ENCODE measurements at regions of chr16 and their contacts with region 1.

Region 1: GRCh38 chr16:71883849-71884638 is at the start of gene ZNF821:
- DNase-seq: peak; percentile 84 to 86
- ATAC-seq: peak; percentile 91 to 92 (median 91)
- H3K4me3 ChIP-seq: peak within 1 kb of the TSS; percentile 93
- H3K27ac ChIP-seq: peak within 1 kb of the TSS; percentile 88
- H3K4me1 ChIP-seq: no peaks in the 10 kb centered on the region
- H3K27me3 ChIP-seq: no peaks in the 10 kb centered on the region
- CTCF ChIP-seq: peak; percentile 49
- total RNA-seq, gene ZNF821: 3.1 to 6.1 (median 4.3) TPM

Region 2: DNA sequence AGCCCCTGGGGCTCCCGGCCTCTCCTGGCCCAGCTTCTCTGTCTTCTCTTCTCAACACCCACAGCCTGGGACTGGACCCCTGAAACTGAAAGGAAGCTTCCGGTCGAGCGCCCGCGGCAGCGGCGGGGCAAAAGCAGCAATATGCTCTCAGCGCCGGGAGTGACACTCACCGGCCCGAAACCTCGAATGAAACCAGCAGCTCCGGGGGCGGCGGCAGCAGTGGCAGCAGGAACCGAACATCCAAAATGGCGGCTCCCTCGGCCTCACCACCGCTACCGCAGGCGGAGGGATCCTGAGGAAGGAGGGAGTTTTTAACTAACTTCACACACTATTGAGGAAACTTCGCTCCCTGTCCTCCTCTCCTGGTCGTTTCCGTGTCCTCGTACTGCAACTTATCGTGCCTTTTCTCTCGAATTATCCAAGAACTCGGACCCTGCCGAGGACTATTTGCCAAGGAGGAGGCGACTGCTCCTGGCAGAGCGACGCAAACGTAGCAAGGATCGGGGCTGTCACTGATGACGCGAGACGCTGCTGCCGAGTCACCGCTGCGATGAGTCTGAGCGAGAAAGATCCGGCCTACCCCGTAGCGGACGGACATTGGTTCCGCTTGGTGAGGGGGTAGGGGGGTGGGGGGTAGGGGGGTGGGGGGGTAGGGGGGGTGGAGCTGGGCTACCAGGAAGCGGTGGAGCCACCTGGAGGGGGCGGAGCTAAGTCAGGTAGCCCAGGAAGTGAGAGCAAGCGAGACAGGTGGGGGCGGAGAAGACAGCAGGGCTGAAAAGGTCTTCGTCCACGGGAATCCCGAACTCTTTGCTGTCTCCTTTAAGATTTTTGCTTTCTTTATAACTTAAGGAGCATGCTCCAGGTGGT is 75.2 kb before region 1 on chr16 and contains the start of gene AP1G1:
- intact Hi-C with region 1: loop called in 1 of 2 experiments (anchors 5 kb)
- DNase-seq: peak; percentile 95 to 98
- ATAC-seq: peak; percentile 95 to 98 (median 97)
- H3K4me3 ChIP-seq: peak within 1 kb of the TSS; percentile 99
- H3K27ac ChIP-seq: peak within 1 kb of the TSS; percentile 100
- H3K4me1 ChIP-seq: peaks cover 29% of the 10 kb centered on the region
- H3K27me3 ChIP-seq: no peaks in the 10 kb centered on the region
- CTCF ChIP-seq: no peak
- total RNA-seq, gene AP1G1: 54.1 to 69.8 (median 62.8) TPM

Region 3: DNA sequence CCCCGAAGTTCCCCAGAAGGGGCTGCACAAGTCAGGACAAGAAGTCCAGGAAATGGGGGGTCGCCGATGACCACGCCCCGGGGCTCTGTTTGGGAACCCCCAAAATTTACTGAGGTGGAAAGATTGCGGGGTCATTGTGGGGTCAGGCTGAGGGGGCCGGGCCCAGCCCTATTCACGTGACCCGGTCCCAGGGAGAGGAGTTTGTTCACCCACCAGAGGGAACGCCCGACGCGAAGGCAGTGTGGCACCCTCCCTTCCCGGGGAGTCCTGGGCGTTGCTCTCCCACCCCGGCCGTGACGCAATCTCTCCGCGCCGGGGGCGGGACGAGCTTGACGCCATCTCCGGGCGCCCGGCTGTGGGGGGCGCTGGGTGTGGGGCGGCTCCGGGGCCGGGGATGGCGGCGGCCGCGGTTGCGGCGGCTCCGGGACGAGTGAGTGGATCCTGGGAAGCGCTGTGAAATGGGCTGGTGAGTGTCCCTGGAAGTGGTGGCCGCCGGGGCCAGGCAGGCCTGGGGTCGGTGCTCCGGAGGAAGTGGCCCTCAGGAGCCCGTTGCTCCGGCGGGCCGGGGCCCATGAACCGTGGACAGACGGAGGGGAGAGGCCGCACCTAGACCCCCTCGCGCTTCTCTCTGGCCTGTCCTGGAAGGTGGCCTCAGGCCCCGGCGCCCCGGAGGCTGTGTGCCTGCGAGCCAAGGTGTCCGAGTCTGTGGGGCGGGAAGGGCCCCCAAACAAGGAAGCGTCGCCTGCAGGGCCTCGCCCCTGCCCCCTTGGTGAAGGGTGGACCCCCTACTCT is 38.2 kb before region 1 on chr16 and contains the start of gene ATXN1L:
- intact Hi-C with region 1: loop called in 1 of 2 experiments (anchors 5 kb)
- DNase-seq: peak; percentile 93 to 96
- ATAC-seq: peak; percentile 94 to 96 (median 95)
- H3K4me3 ChIP-seq: peak within 1 kb of the TSS; percentile 100
- H3K27ac ChIP-seq: peak within 1 kb of the TSS; percentile 96
- H3K4me1 ChIP-seq: peaks cover 26% of the 10 kb centered on the region
- H3K27me3 ChIP-seq: no peaks in the 10 kb centered on the region
- CTCF ChIP-seq: no peak
- total RNA-seq, gene ATXN1L: 18.1 to 28.0 (median 22.4) TPM

Region 4: GRCh38 chr16:71961066-71962039 is 77.3 kb after region 1 on chr16:
- intact Hi-C with region 1: loop called (anchors 5 to 10 kb)
- DNase-seq: peak; percentile 86 to 88
- ATAC-seq: peak; percentile 86 to 99 (median 96)
- H3K4me3 ChIP-seq: no peak overlapping the region
- H3K27ac ChIP-seq: no peak overlapping the region
- H3K4me1 ChIP-seq: no peaks in the 10 kb centered on the region
- H3K27me3 ChIP-seq: no peaks in the 10 kb centered on the region
- CTCF ChIP-seq: peak; percentile 81